ENCODE measurements at regions of chr5 and their contacts with region 1.

Region 1: GRCh38 chr5:31232273-31232888 is 38.9 kb downstream of the CDH6 start:
- DNase-seq: no peak

Region 2: DNA sequence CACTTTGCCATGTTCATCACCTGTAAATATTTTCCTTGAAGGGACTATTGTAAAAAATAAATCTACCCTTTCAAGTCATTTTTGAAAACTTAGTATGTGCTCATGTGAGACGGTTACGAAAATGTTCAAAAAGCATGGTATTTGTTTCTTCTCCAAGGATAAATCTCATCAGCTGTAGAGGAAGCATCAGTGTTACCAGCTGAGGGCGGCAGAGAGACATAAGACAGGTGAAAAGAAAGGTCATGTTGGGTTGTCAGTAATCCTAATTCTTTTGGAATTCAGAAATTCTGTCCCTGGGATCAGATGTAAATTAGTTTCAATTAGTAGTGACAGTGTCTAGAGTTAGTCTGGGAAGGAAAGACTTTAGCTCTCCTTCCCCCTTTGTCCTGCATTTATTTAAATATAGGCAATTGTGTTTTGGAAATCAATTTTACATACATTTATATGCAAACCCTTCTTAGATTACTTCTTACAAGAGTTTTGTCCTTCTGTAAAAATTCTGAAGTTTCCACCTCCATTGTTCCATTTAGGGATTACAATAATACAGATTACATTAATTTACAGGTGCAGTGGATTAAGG is 830.8 kb before region 1 on chr5:
- intact Hi-C with region 1: loop called (anchors 5 kb)
- DNase-seq: no peak

Region 3: DNA sequence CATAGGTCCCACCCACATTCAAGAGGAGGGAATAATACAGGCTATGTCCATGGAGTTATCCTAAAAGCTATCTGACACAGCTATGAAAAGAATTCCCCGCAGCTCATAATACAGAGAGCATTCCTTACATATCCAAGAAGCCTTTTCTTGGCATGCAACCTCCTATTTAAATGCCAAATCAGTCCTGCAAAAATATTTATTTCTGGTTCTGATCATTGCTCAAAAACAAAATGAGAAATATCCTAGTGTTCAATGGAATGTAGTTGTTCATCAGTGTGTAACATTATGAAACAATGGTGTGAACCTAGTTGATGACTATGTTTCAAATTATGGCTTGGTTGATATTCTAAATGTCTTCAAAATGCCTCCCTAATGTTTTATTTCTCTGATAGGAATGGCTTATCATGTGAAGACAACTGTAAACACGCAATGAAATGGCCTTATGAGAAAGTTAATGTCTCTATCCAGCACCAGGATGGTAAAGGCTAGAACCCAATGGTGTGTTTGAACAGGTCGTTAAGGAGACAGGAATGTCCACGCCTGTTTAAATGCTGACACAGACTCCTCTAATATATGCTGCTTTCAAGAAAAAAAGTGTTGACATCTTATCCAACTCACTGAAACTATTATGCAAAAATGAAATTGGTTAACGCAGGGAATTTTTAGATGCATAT is 165.6 kb before region 1 on chr5:
- intact Hi-C with region 1: no loop called
- DNase-seq: no peak

Measured in cardiac septum (tissue), 1 donor.